CD8-positive, alpha-beta T cell (primary cell): ENCODE measurements at regions of chr5 and their contacts with region 1.

Region 1: GRCh38 chr5:139482050-139482889 is at the start of gene STING1:
- DNase-seq: peak; percentile 22 to 89 (median 73)
- ATAC-seq: peak; percentile 78
- H3K4me3 ChIP-seq: peak within 1 kb of the TSS; percentile 56 to 61
- H3K4me3 Mint-ChIP-seq: peak within 1 kb of the TSS; percentile 90
- H3K27ac ChIP-seq: peak within 1 kb of the TSS; percentile 58 to 84
- H3K27ac Mint-ChIP-seq: peak within 1 kb of the TSS; percentile 97
- H3K4me1 ChIP-seq: peaks cover 26% of the 10 kb centered on the region
- H3K4me1 Mint-ChIP-seq: peaks cover 34% of the 10 kb centered on the region
- H3K27me3 ChIP-seq: no peaks in the 10 kb centered on the region
- H3K27me3 Mint-ChIP-seq: no peaks in the 10 kb centered on the region
- CTCF ChIP-seq: no peak
- total RNA-seq, gene STING1: 55.0 to 57.8 TPM

Region 2: DNA sequence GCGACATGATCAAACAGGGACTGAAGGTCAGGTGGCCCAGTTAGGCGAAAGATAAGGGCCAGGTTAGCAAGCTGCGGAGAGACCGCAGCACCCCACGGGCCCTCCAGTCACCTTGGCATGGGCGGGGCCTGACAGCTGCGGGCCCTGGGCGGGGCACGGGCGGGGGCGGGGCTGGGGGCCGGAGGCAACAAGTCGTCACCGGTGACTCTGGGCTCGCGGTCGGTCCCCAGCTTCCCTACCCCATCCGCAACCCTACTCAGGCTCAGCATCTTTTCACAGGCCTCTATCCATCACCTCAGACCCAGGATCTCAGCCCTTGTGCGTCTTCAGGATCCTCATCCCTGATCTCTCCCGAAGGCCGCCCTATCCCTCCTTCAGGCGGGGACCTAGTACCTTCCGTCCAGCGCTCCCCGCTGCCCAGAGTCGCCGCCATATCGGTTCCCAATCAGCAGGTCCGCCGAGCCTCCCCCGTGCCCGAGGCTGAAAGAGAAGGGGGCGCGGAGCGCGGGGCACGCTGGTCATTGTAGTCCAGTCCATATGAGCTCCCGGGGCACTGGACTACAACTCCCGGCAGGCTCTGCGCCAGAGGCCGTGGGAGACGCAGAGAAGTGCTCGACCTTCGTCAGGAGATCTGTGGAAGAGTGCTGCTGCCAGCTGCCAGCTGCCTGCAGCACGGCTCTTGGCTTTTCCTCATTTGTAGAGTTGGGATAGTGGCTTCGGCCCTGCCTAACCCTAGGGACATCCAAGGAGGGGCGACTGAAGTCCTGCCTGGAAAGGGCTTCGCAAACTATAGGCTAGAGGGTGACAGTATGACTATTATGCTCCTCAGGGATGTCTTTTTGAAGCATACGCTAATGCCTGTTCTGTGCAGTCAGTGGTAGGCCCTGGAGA is 43.0 kb before region 1 on chr5 and contains the start of gene DNAJC18:
- CTCF ChIA-PET with region 1: interaction called, 3 read pairs
- POLR2A ChIA-PET with region 1: interaction called, 27 read pairs
- intact Hi-C with region 1: loop called in 1 of 2 experiments (anchors 1 kb)
- DNase-seq: peak; percentile 78 to 93 (median 90)
- ATAC-seq: peak; percentile 88
- H3K4me3 ChIP-seq: peak within 1 kb of the TSS; percentile 95 to 98
- H3K4me3 Mint-ChIP-seq: peak within 1 kb of the TSS; percentile 98
- H3K27ac ChIP-seq: peak within 1 kb of the TSS; percentile 97 to 98
- H3K27ac Mint-ChIP-seq: peak within 1 kb of the TSS; percentile 99
- H3K4me1 ChIP-seq: peaks cover 24% of the 10 kb centered on the region
- H3K4me1 Mint-ChIP-seq: peaks cover 33% of the 10 kb centered on the region
- H3K27me3 ChIP-seq: no peaks in the 10 kb centered on the region
- H3K27me3 Mint-ChIP-seq: no peaks in the 10 kb centered on the region
- CTCF ChIP-seq: no peak
- total RNA-seq, gene DNAJC18: 8.0 to 10.2 TPM

Region 3: GRCh38 chr5:139468421-139468931 is 13.8 kb before region 1 on chr5:
- CTCF ChIA-PET with region 1: interaction called, 3 read pairs
- POLR2A ChIA-PET with region 1: interaction called, 24 read pairs
- intact Hi-C with region 1: no loop called
- DNase-seq: no peak
- ATAC-seq: no peak
- H3K4me3 ChIP-seq: no peak overlapping the region
- H3K4me3 Mint-ChIP-seq: peak overlapping the region; percentile 22
- H3K27ac ChIP-seq: no peak overlapping the region
- H3K27ac Mint-ChIP-seq: peak overlapping the region; percentile 41
- H3K4me1 ChIP-seq: peaks cover 46% of the 10 kb centered on the region
- H3K4me1 Mint-ChIP-seq: peaks cover 52% of the 10 kb centered on the region
- H3K27me3 ChIP-seq: no peaks in the 10 kb centered on the region
- H3K27me3 Mint-ChIP-seq: no peaks in the 10 kb centered on the region
- CTCF ChIP-seq: no peak